CD8-positive, alpha-beta T cell (primary cell): ENCODE measurements at regions of chr2 and their contacts with region 1.

Region 1: GRCh38 chr2:226906163-226906693 is 70.4 kb downstream of the RHBDD1 start:
- DNase-seq: peak in 1 of 9 experiments; percentile 23
- ATAC-seq: peak; percentile 54
- H3K4me3 ChIP-seq: no peak overlapping the region
- H3K4me3 Mint-ChIP-seq: peak overlapping the region; percentile 32
- H3K27ac ChIP-seq: no peak overlapping the region
- H3K27ac Mint-ChIP-seq: peak overlapping the region; percentile 72
- H3K4me1 ChIP-seq: peaks cover 9% of the 10 kb centered on the region
- H3K4me1 Mint-ChIP-seq: peaks cover 32% of the 10 kb centered on the region
- H3K27me3 ChIP-seq: no peaks in the 10 kb centered on the region
- H3K27me3 Mint-ChIP-seq: no peaks in the 10 kb centered on the region
- CTCF ChIP-seq: no peak

Region 2: DNA sequence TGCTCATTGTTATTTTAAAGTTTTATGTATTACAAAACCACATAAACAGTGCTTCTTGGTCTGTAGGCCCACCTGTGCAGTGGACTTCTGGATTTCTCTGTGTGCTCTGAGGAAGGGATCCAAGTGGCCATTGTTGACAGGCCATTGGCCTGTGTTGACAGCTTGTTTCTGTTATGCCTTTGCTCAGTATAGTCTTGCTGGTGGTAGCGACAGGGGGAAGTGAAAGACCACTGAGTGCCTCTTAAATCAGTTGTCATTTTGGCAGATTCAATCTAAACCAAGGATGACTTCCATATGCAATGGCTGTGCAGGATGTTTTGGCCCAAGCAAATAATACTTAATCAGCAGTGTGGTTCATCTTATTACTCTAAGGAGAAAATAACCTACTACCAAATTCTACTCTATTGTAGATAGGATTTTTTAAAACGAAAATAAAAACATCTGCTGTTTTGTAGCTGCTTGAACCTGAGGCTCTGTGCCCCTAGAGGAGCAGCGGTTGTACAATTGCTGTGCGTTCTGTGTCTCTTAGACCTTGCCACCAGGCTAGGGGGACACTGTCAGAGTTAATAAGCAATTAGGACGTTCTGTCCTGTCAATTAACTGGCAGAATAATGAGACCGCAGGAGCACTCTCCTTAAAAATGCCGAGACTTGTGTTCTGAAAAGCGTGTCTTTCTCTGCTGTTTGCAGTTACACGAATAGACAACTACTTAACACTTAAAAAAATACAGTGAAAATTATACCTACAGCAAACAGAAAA is 37.8 kb after region 1 on chr2:
- CTCF ChIA-PET with region 1: no interaction called
- POLR2A ChIA-PET with region 1: no interaction called
- intact Hi-C with region 1: loop called in 1 of 2 experiments (anchors 1 kb)
- DNase-seq: no peak
- ATAC-seq: no peak
- H3K4me3 ChIP-seq: no peak overlapping the region
- H3K4me3 Mint-ChIP-seq: no peak overlapping the region
- H3K27ac ChIP-seq: no peak overlapping the region
- H3K27ac Mint-ChIP-seq: no peak overlapping the region
- H3K4me1 ChIP-seq: no peaks in the 10 kb centered on the region
- H3K4me1 Mint-ChIP-seq: no peaks in the 10 kb centered on the region
- H3K27me3 ChIP-seq: no peaks in the 10 kb centered on the region
- H3K27me3 Mint-ChIP-seq: no peaks in the 10 kb centered on the region
- CTCF ChIP-seq: no peak

Region 3: DNA sequence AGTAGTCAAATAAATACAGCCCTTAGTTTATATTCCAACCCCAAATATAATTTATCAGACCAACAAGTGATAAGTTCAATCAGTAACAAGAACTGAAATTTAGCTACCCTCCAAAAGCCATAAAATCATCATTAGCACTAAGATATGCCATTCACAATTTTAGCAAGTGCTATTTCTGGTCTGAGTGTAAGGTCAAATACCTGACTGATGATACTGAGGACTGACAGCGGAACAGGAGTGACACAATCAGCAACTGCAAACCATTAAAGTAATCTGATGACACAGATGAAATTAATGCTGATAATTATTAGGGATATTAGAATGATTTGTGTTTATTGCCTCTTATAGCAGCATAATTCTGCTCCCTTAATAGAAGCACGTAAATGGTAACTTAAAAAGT is 1428.0 kb after region 1 on chr2:
- CTCF ChIA-PET with region 1: no interaction called
- POLR2A ChIA-PET with region 1: no interaction called
- intact Hi-C with region 1: no loop called
- DNase-seq: no peak
- ATAC-seq: no peak
- H3K4me3 ChIP-seq: no peak overlapping the region
- H3K4me3 Mint-ChIP-seq: no peak overlapping the region
- H3K27ac ChIP-seq: no peak overlapping the region
- H3K27ac Mint-ChIP-seq: no peak overlapping the region
- H3K4me1 ChIP-seq: no peaks in the 10 kb centered on the region
- H3K4me1 Mint-ChIP-seq: no peaks in the 10 kb centered on the region
- H3K27me3 ChIP-seq: no peaks in the 10 kb centered on the region
- H3K27me3 Mint-ChIP-seq: no peaks in the 10 kb centered on the region
- CTCF ChIP-seq: no peak